ENCODE measurements at regions of chr19 and their contacts with region 1.

Region 1: GRCh38 chr19:43584484-43584883 is 8.9 kb downstream of the PINLYP start:
- DNase-seq: no peak
- H3K4me3 Mint-ChIP-seq: no peak overlapping the region
- H3K27ac Mint-ChIP-seq: peak overlapping the region; percentile 79
- H3K4me1 Mint-ChIP-seq: peaks cover 15% of the 10 kb centered on the region
- H3K27me3 Mint-ChIP-seq: no peaks in the 10 kb centered on the region

Region 2: GRCh38 chr19:43526884-43527859 is 57.3 kb before region 1 on chr19 and contains the start of gene ETHE1:
- intact Hi-C with region 1: loop called (anchors 5 kb)
- DNase-seq: peak; percentile 76
- H3K4me3 Mint-ChIP-seq: peak within 1 kb of the TSS; percentile 87
- H3K27ac Mint-ChIP-seq: peak within 1 kb of the TSS; percentile 97
- H3K4me1 Mint-ChIP-seq: peaks cover 12% of the 10 kb centered on the region
- H3K27me3 Mint-ChIP-seq: no peaks in the 10 kb centered on the region
- total RNA-seq, gene ETHE1: 64.6 and 65.5 TPM in 2 replicates